ENCODE measurements at regions of chrX and their contacts with region 1.

Region 1: GRCh38 chrX:107537815-107538214 is 88.4 kb downstream of the FRMPD3 start:
- DNase-seq: peak; percentile 62
- H3K4me3 ChIP-seq: no peak overlapping the region
- H3K27ac ChIP-seq: no peak overlapping the region
- H3K4me1 ChIP-seq: no peaks in the 10 kb centered on the region
- H3K27me3 ChIP-seq: no peaks in the 10 kb centered on the region

Region 2: DNA sequence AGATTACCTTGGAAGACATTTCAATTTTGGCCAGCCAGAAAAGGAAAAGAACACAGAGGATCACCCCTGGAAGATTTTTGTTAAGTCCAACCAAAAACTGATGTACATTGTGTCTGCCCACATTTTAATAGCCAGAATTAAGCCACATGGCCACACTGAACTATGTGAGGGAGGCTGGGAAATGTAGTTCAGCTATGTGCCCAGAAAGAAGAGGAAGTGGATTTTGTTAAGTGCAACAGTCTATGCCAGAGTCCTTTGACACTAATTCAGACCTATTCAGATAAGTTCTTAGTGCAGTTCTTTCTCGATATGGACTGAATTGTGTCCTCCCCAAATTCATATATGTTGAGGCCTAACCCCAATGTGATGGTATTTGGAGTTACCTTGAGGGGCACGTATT is 108.9 kb after region 1 on chrX:
- in situ Hi-C with region 1: loop called (anchors 10 kb)
- DNase-seq: no peak
- H3K4me3 ChIP-seq: no peak overlapping the region
- H3K27ac ChIP-seq: no peak overlapping the region
- H3K4me1 ChIP-seq: no peaks in the 10 kb centered on the region
- H3K27me3 ChIP-seq: no peaks in the 10 kb centered on the region

Region 3: GRCh38 chrX:107659768-107660167 is 122.0 kb after region 1 on chrX:
- in situ Hi-C with region 1: no loop called
- DNase-seq: peak; percentile 74
- H3K4me3 ChIP-seq: no peak overlapping the region
- H3K27ac ChIP-seq: no peak overlapping the region
- H3K4me1 ChIP-seq: peaks cover 6% of the 10 kb centered on the region
- H3K27me3 ChIP-seq: no peaks in the 10 kb centered on the region

Region 4: DNA sequence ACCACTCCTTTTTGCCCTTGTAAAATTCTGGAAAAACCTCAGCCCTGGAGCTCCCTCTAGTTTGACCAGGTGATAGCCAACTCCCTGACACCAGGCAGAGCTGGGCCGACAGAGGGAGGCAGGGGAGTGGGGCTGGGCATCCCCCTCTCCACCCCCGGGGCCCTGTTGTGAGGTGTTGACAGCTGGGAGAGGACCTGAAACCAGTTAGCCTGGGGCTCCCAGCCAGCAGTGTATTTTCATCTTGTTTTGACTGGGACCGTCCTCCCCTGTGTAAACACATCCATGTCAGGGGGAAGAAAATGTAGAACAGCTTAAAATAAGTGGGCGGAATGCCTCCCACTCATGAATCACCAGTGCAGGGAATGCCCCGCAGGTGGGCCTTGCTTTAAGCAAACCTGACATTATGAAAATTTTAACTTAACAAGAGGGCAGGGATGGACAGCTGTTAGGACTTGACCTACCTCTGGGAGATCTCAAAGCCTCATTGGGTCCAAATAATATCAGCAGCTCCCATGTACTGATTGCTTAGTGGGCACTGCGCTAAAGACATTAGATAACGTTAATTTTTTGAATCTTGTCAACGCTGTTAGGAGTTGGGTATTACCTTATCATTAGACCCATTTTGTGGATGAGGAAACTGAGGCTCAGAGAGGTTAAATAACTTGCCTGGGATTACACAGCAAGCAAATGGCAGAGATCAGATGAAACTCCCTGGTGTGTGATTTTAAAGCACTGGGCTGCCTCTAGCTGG is 191.9 kb after region 1 on chrX:
- in situ Hi-C with region 1: loop called (anchors 10 kb)
- DNase-seq: no peak
- H3K4me3 ChIP-seq: no peak overlapping the region
- H3K27ac ChIP-seq: no peak overlapping the region
- H3K4me1 ChIP-seq: no peaks in the 10 kb centered on the region
- H3K27me3 ChIP-seq: no peaks in the 10 kb centered on the region

Measured in GM23248 (cell line).